ENCODE measurements at regions of chr3 and their contacts with region 1.

Region 1: DNA sequence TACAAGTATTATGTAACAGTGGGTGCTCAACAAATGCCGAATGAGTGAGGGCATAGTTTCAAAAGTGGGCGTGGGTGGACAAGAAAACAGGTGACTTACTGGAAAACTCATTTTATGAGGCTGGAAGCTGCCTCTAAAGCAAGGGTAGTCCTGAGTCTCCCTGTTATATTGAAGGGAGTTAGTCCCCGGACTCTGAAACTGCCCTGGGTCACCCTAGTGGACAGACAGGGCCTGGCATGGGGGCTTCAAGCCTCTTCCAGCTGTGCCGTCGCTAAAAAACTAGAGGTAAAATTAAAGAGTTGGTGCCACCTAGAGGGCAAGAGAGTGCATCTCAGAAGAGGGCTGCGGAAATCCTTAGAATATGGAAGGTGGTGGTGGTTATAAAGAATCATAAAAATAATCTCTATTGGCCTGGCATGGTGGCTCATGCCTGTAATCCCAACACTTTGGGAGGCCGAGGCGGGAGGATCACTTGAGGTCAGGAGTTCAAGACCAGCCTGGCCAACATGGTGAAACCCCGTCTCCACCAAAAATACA is 3.7 kb upstream of the COPG1 start:
- DNase-seq: peak; percentile 92 to 96 (median 94)
- H3K4me3 ChIP-seq: peak overlapping the region in 2 of 7 experiments; percentile 20 to 49
- H3K27ac ChIP-seq: no peak overlapping the region
- H3K4me1 ChIP-seq: peaks cover 6 to 29% (median 26%) of the 10 kb centered on the region in 4 experiments
- H3K27me3 ChIP-seq: no peaks in the 10 kb centered on the region

Region 2: DNA sequence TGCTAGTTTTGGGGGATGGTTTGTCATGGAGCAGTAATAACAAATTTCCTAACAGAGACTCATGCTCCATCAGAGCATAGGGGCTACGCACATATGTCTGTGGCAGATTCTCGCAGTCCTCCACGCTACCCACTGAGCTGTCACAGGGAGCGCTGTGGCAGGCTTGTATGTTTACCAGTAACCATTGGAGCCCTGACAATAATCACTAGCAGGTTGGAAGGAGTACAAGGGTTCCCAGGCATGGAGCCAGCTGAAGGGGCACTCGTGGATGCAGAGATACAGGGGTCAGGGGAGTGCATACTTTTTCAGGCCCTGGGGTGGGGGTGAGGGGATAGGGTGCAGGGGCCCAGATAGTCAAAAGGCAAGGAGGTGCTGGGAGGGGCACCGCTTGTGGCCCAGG is 193.0 kb before region 1 on chr3:
- CTCF ChIA-PET with region 1: interaction called, 17 read pairs
- POLR2A ChIA-PET with region 1: no interaction called
- DNase-seq: peak in 2 of 3 donors; percentile 7 to 35
- H3K4me3 ChIP-seq: no peak overlapping the region
- H3K27ac ChIP-seq: no peak overlapping the region
- H3K4me1 ChIP-seq: peaks cover 0 to 16% (median 4%) of the 10 kb centered on the region in 4 experiments
- H3K27me3 ChIP-seq: no peaks in the 10 kb centered on the region

Region 3: DNA sequence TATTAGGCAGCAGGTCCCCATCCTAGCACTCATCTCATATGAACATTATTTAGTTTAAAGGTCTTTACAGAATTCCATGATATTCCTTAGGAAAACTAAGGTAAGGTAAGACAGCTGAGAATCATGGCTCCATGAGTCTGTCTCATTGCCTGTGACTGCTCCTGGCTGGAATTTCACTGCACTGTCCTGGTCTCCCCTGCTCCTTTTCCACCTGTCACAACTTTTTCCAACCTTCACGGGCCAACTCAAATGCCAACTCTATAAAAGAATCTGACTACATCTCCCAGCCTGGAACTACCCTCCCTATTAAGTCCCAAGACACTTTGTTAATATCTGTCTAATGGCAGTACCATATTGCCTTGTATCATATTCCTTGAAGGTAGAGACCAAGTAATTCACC is 69.7 kb before region 1 on chr3:
- CTCF ChIA-PET with region 1: interaction called, 12 read pairs
- POLR2A ChIA-PET with region 1: interaction called, 7 read pairs
- DNase-seq: no peak
- H3K4me3 ChIP-seq: no peak overlapping the region
- H3K27ac ChIP-seq: peak overlapping the region in 1 of 2 experiments; percentile 55
- H3K4me1 ChIP-seq: peaks cover 5 to 30% (median 11%) of the 10 kb centered on the region in 4 experiments
- H3K27me3 ChIP-seq: no peaks in the 10 kb centered on the region

Region 4: GRCh38 chr3:129195731-129196256 is 49.9 kb before region 1 on chr3:
- CTCF ChIA-PET with region 1: interaction called, 15 read pairs
- POLR2A ChIA-PET with region 1: no interaction called
- DNase-seq: peak; percentile 71 to 90 (median 90)
- H3K4me3 ChIP-seq: peak overlapping the region in 4 of 7 experiments; percentile 38 to 55 (median 48)
- H3K27ac ChIP-seq: peak overlapping the region in 1 of 2 experiments; percentile 36
- H3K4me1 ChIP-seq: peaks cover 5 to 29% (median 22%) of the 10 kb centered on the region in 4 experiments
- H3K27me3 ChIP-seq: no peaks in the 10 kb centered on the region

Region 5: DNA sequence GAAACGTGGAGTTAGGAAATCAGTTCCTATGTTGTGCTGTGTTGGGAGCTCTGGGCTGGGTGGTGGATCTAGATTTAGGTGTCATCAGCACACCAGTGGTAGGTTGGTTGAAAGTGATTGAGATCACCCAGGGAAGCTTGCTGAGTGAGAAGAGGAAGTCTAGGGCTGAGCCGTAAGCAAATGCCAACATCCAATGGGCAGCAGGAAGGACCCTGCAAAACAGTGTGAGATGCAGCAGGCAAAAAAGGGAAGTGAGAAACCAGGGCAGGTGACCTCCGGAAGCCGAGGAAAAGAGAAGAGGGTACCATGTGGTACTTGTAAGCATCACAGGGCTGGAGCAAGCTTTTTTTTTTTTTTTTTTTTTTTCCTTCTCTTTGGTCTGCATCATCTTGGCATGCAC is 12.2 kb before region 1 on chr3:
- CTCF ChIA-PET with region 1: interaction called, 57 read pairs
- POLR2A ChIA-PET with region 1: no interaction called
- DNase-seq: peak; percentile 87 to 97 (median 96)
- H3K4me3 ChIP-seq: no peak overlapping the region
- H3K27ac ChIP-seq: no peak overlapping the region
- H3K4me1 ChIP-seq: peaks cover 9 to 55% (median 38%) of the 10 kb centered on the region in 4 experiments
- H3K27me3 ChIP-seq: no peaks in the 10 kb centered on the region

Region 6: DNA sequence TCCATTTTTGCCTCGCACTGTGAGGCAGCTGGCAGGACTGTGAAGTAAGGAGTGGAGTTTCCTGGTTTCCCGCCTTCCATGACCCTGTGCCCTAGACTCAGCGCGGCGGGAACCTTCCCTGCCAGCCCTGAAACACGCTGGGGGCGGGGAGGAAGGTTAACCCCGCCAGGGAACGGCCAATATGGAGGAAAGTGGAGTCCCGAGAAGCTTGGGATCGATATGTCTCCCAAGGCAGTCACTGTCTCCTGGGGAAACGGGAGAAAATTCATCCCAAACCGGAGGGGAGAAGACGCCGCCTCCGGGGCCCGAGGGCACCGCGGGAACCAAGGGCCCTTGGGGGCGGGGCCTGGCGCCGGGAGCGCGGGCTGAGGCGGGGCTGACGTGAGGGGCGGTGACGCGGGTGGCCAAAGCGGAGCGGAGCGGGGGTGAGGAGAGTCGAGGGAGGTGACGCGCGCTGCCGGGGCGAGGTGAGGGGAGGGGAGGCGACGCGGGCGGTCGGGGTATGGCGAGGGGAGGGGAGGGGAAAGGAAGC is 32.8 kb after region 1 on chr3 and contains the start of gene HMCES:
- CTCF ChIA-PET with region 1: no interaction called
- POLR2A ChIA-PET with region 1: no interaction called
- DNase-seq: peak; percentile 90 to 97 (median 95)
- H3K4me3 ChIP-seq: peak within 1 kb of the TSS; percentile 64 to 99 (median 89)
- H3K27ac ChIP-seq: peak within 1 kb of the TSS; percentile 84 to 87
- H3K4me1 ChIP-seq: peaks cover 6 to 29% (median 19%) of the 10 kb centered on the region in 4 experiments
- H3K27me3 ChIP-seq: no peaks in the 10 kb centered on the region

Region 7: DNA sequence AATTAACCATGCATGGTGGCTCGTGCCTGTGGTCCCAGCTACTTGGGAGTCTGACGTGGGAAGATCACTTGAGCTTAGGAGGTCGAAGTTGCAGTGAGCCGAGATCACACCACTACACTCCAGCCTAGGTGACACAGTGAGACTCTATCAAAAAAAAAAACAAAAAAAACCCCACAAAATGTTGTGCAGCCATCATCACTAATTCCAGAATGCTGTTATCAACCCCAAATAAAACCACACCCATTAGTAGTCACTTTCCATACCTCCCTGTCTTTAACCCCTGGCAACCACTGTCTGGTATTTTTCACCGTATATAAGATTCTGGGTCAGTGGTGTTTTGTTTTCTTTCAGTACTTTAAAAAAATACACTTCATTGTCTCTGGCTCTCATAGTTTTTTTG is 49.6 kb after region 1 on chr3:
- CTCF ChIA-PET with region 1: no interaction called
- POLR2A ChIA-PET with region 1: no interaction called
- DNase-seq: no peak
- H3K4me3 ChIP-seq: no peak overlapping the region
- H3K27ac ChIP-seq: no peak overlapping the region
- H3K4me1 ChIP-seq: no peaks in the 10 kb centered on the region
- H3K27me3 ChIP-seq: no peaks in the 10 kb centered on the region

Measured in common myeloid progenitor, CD34-positive (primary cell).